ENCODE measurements at regions of chr18 and their contacts with region 1.

Region 1: DNA sequence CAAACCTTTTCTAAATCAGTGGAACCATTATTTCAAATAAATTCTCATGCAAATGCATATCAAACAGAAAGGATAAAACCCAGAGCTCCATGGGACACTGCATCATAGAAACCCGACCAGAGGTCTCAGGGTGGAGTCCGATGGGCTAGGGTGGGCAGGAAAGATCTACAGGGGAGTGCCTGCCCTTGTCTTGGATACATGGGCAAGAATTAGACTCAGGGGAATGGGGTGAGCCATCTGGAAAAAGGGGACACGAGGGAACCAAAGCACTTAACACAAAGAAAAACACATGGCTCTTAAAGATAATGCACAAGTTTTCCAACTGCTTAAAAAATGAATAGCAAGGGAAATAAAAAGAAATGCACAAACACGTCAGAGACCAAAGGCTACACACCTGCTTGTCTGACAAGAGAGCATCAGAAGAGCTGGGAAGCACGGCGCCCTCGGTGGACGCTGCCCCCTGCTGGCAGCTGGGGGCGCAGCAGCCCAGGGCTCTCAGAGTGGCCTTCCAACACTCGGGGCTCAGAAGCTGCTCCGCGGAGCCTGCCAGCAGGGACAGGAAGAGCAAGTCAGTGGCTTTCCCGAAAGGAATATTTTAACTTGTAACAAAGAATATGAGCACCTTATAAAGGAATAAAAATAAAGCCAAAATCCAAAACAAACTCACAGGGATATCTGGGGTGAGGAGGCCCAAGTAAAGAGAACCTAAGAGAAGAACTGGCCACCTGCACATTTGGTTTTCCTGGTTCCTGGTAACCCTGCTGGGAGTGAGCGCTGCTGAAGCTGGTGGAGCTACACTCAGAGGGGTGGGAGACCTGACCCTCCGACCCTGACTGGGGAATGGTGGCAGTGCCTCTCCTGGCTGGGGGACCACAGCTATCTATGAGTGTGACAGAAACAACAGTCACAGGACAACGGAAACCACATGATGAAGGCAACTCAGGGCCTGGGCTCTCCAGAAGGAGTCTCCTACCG is 54.5 kb downstream of the SIGLEC15 start:
- DNase-seq: peak; percentile 74
- H3K4me3 ChIP-seq: no peak overlapping the region
- H3K27ac ChIP-seq: no peak overlapping the region
- H3K4me1 ChIP-seq: no peaks in the 10 kb centered on the region
- H3K27me3 ChIP-seq: no peaks in the 10 kb centered on the region

Region 2: DNA sequence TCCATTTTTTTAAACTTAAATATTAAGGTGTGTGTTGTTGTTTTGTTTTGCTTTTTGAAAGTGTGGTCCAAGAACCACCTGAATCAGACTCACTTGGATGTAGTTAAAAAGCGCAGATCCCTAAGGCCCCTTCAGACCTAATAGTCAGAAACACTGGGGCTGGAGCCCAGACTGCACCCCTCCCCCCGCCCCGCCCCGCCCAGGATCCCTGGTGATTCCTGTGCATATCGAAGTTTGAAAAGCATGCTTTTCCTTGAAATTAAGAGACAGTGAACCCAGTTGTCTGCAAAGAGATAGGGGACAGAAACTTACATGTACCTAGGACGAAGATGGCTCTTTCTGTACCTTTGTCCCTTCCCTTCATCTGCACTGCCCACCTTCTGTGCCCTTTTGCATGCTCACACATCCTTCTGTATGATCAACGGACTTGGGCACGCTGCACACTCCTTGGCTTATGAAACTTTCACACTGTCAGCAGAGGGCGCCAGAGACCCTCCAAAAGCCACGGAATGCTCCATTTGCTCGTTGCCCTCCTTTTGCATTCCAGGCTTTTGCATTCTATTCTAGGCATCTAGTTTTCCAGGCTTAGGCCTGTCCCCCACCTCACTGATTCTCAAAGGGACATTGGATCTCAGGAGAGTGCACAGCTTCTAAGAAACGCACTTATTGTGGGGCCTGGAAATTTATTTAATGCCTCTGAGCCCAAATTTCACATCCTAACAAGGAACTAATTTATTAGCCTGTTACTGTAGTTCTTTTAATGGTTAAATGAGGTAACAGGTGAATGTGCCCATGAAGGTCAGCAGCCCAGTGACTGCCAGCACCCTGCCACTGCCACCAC is 188.8 kb before region 1 on chr18:
- in situ Hi-C with region 1: loop called (anchors 10 kb)
- DNase-seq: peak; percentile 85
- H3K4me3 ChIP-seq: no peak overlapping the region
- H3K27ac ChIP-seq: no peak overlapping the region
- H3K4me1 ChIP-seq: no peaks in the 10 kb centered on the region
- H3K27me3 ChIP-seq: no peaks in the 10 kb centered on the region

Region 3: DNA sequence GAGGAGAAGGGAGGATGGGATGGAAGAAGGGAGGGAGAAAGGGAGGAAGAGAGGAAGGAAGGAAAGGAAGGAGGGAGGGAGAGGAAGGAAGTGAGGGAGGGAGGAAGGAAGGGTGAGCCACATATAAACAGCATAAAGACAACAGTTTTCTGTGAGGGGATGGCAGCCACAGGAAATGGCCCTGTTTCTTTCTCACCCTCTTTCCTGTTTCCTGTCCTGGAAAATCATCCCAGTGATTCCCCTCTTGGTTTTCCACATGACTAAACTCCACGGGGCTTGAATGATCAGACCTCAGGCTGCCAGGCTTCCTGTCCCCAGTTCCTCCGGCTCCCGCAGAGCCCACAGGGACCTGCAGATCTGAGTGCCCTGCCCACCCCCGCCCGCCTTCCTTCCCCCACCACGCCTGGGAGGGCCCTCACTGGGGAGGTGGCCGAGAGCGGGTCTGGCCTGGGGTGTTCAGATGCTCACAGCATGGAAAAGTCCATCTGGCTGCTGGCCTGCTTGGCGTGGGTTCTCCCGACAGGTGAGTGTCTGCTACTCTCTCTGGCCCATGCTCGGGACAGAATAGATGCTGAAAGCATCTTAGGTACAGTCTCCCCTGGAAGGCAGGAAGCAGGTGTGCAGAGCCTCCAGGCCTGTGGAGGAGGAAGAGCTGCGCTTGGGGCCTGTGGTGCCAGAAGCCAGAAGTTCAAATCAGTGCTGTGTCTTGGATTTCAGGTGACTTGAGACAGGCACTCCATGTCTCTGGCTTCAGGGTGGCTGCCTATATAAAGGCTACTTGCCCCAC is 54.5 kb before region 1 on chr18 and contains the start of gene SIGLEC15:
- in situ Hi-C with region 1: no loop called
- DNase-seq: no peak
- H3K4me3 ChIP-seq: no peak within 1 kb of the TSS
- H3K27ac ChIP-seq: no peak within 1 kb of the TSS
- H3K4me1 ChIP-seq: peaks cover 18% of the 10 kb centered on the region
- H3K27me3 ChIP-seq: no peaks in the 10 kb centered on the region
- total RNA-seq, gene SIGLEC15: 0.22 and 0.38 TPM in 2 replicates